ENCODE measurements at regions of chr1 and their contacts with region 1.

Region 1: DNA sequence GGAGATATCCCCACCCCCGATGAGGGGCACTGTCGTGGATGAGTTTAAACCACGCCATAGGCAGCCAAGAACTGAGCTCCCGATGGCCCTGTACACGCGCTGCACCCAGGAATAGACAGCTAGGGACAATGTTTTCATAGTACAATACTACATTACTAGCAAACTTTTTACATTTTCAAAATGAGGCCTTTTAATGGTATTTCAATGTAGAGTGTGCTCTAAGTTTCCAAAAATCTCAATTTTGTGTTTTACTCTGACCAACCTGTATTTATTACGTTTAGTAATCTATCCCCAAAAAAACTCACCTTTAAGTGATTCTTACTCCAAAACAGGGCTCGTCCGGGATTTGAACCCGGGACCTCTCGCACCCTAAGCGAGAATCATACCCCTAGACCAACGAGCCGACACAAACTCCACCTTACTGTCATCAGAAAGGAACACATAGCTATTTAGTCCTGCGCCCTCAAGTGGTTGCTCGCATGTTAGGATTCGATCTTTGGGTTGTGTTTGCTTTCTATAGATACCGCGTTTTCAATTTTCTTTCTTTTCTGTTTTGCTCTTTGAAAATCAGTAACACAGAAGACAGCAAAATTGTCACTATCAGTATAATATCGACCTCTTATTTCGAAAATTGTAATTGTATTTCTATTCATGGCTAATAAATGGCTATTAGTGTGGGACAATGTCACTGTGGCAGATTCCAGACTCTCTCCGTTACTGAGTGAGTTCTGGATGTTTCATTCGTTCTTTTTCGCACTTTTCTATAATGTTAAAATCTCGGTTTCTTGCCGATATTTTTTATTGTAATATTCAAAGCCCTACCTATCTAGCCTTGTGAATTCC is 6.4 kb upstream of the MPZL1 start:
- DNase-seq: peak; percentile 93
- H3K4me3 Mint-ChIP-seq: peak overlapping the region; percentile 81
- H3K27ac Mint-ChIP-seq: peak overlapping the region; percentile 92
- H3K4me1 Mint-ChIP-seq: peaks cover 51% of the 10 kb centered on the region
- H3K27me3 Mint-ChIP-seq: peaks cover 6% of the 10 kb centered on the region

Region 2: DNA sequence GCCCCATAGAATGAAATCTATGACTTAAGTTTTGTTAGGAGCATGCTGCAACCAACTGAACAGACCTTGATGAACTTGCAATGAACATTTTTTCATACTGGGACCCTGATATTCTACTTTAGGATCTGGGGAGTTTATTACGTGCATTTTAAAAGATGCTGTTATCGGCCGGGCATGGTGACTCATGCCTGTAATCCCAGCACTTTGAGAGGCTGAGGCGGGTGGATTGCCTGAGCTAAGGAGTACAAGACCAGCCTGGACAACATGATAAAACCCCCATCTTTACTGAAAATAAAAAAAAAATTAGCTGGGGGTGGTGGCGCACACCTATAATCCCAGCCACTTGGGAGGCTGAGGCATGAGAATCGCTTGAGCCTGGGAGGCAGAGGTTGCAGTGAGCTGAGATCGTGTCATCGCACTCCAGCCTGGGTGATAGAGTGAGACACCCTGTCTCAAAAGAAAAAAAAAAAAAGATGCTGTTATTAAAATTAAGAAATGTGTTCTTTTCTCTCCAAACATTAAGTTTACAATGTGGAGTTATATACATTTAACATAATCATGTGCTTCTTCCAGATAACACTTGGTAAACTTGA is 13.5 kb after region 1 on chr1:
- CTCF ChIA-PET with region 1: interaction called, 10 read pairs
- POLR2A ChIA-PET with region 1: no interaction called
- DNase-seq: no peak
- H3K4me3 Mint-ChIP-seq: no peak overlapping the region
- H3K27ac Mint-ChIP-seq: no peak overlapping the region
- H3K4me1 Mint-ChIP-seq: peaks cover 13% of the 10 kb centered on the region
- H3K27me3 Mint-ChIP-seq: no peaks in the 10 kb centered on the region

Region 3: GRCh38 chr1:167748906-167749305 is 33.5 kb after region 1 on chr1:
- CTCF ChIA-PET with region 1: no interaction called
- POLR2A ChIA-PET with region 1: no interaction called
- DNase-seq: no peak
- H3K4me3 Mint-ChIP-seq: no peak overlapping the region
- H3K27ac Mint-ChIP-seq: no peak overlapping the region
- H3K4me1 Mint-ChIP-seq: peaks cover 14% of the 10 kb centered on the region
- H3K27me3 Mint-ChIP-seq: no peaks in the 10 kb centered on the region

Measured in activated CD4-positive, alpha-beta T cell treated with anti-CD3 and anti-CD28 coated beads, Interleukin-2, amount 10 ng/mL, durations not matched to agents 7 days and 5 days (primary cell).